Gastrocnemius medialis (tissue), 4 donors: ENCODE measurements at regions of chr12 and their contacts with region 1.

Region 1: GRCh38 chr12:44930972-44931600 is 55.0 kb upstream of the NELL2 start:
- DNase-seq: no peak
- ATAC-seq: no peak
- H3K4me3 ChIP-seq: no peak overlapping the region
- H3K27ac ChIP-seq: no peak overlapping the region
- H3K4me1 ChIP-seq: no peaks in the 10 kb centered on the region
- H3K27me3 ChIP-seq: no peaks in the 10 kb centered on the region
- CTCF ChIP-seq: peak; percentile 26 to 60 (median 42)
- POLR2A ChIP-seq: no peak

Region 2: DNA sequence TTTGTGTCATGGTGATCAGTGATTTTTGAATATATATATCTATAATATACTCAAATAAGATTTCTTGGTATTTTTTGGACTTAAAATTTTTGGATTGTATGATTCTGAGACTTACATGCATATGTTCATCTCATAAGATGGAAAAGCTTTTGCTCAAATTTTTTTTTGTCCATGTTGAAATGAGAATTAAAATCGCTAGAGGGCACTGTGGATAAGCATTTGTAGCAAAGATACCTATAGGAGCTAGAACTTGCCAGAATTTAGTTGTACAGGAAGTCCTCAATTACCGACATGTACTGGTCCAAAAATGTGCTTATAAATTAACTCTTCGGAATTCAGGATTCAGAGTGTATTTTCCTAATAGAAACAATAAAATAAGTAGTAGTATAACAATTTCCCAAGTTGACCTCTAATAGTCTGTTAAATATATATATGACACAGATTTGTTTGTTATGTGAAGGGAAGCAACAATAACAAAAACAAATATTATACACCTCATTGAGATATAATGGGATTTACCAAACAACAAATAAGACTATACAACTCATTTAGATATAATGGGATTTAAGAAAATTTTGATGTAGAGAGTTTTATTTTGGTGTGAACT is 915.6 kb before region 1 on chr12:
- in situ Hi-C with region 1: loop called (anchors 25 kb)
- intact Hi-C with region 1: no loop called
- DNase-seq: no peak
- ATAC-seq: peak in 1 of 2 donors; percentile 36
- H3K4me3 ChIP-seq: no peak overlapping the region
- H3K27ac ChIP-seq: no peak overlapping the region
- H3K4me1 ChIP-seq: no peaks in the 10 kb centered on the region
- H3K27me3 ChIP-seq: no peaks in the 10 kb centered on the region
- CTCF ChIP-seq: peak in 4 of 5 experiments; percentile 30 to 59 (median 56)
- POLR2A ChIP-seq: no peak

Region 3: DNA sequence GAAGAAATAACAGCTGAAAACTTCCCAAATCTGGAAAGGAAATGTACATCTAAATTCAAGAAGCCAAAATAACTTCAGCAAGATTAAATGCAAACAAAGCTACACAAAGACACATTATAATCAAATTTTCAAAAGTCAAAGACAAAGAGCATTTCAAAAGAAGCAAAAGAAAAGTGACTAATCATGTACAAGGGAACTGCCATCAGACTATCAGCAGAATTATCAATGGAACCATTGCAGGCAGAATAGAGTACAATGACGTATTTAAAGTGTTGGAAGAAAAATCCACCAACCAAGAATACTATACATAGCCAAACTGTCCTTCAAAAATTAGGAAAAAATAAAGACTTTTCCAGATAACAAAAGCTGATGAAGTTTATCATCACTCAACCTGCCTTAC is 202.5 kb before region 1 on chr12:
- in situ Hi-C with region 1: no loop called
- intact Hi-C with region 1: no loop called
- DNase-seq: no peak
- ATAC-seq: no peak
- H3K4me3 ChIP-seq: no peak overlapping the region
- H3K27ac ChIP-seq: no peak overlapping the region
- H3K4me1 ChIP-seq: no peaks in the 10 kb centered on the region
- H3K27me3 ChIP-seq: peaks cover 0 to 2% (median 0%) of the 10 kb centered on the region in 3 donors
- CTCF ChIP-seq: no peak
- POLR2A ChIP-seq: no peak

Region 4: GRCh38 chr12:44774815-44775411 is 156.2 kb before region 1 on chr12:
- in situ Hi-C with region 1: no loop called
- intact Hi-C with region 1: no loop called
- DNase-seq: no peak
- ATAC-seq: no peak
- H3K4me3 ChIP-seq: no peak overlapping the region
- H3K27ac ChIP-seq: no peak overlapping the region
- H3K4me1 ChIP-seq: no peaks in the 10 kb centered on the region
- H3K27me3 ChIP-seq: peaks cover 0 to 2% (median 0%) of the 10 kb centered on the region in 3 donors
- CTCF ChIP-seq: no peak
- POLR2A ChIP-seq: no peak